ENCODE measurements at regions of chr1 and their contacts with region 1.

Region 1: DNA sequence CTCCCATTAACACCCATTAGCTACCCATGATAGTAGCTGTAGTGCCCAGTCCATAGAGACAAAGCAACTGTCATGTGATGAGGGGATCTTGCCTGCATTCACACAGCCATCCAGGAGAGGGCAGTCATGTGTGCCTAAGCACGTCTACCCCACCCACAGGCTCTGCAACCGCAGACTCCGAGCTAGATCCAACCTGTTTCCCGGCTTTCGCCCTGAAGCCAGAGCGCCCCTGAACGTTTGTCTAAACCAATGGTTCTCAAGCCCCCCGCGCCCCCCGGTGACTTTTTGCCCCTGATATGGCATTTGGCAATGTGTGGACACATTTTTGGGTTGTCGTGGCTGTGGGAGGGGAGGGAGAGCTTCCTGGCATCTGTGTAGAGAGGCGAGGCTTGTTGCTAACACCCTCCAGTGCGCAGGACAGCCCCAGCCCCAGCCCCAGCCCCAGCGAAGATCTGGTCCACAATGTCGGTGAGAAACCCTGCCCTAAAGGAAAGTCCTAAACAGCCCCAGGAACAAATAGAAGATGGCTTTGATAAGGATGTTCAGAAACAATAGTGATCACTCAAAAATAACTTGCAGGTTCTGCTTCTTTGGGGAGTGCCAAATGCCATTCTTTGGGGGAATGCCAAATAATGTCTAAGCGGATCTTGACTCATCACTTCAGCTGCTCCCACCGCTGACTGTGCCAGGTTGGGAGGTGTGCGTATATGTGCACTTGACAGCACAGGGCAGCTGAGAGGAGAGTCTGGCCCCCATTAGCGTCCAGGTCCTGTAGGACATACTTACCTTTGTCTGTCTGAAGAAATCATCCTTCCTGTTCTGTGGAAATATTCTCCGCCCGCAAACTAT is 34.5 kb downstream of the SLC44A3 start:
- DNase-seq: peak; percentile 61 to 78
- H3K4me3 ChIP-seq: peak overlapping the region in 3 of 4 experiments; percentile 16 to 52 (median 25); a peak in 4 of 8 replicates
- H3K27ac ChIP-seq: no peak overlapping the region
- H3K4me1 ChIP-seq: peaks cover 0 to 6% (median under 1%) of the 10 kb centered on the region in 4 experiments; a peak in 3 of 7 replicates
- H3K27me3 ChIP-seq: peaks cover 0 to 5% (median 2%) of the 10 kb centered on the region in 4 experiments; a peak in 3 of 7 replicates
- CTCF ChIP-seq: peak; percentile 93 to 100 (median 95)
- EP300 ChIP-seq: peak in 1 of 2 experiments; percentile 5; a peak in 1 of 3 replicates
- POLR2A ChIP-seq: no peak
- RAD21 ChIP-seq: peak; percentile 93 to 97

Region 2: DNA sequence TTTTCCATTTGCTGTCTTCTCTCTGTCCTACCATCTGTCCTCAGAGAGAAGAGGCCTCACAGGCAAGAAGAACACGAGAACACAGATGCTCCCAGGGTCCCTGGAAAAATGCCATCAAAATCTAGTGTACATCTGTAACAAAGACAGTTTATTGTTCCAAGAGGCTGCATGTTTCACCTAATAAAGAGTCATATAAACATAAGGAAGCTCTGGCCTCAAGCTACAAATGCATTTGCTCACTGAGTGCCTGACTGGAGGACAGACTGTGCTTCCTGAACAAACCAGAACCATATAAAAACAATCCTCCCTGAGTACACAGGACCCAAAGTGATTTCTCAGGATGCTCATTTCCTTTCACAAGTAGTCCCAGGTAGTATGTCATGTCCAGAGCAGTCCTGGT is 110.8 kb before region 1 on chr1:
- CTCF ChIA-PET with region 1: no interaction called
- POLR2A ChIA-PET with region 1: no interaction called
- DNase-seq: no peak
- H3K4me3 ChIP-seq: no peak overlapping the region
- H3K27ac ChIP-seq: no peak overlapping the region
- H3K4me1 ChIP-seq: no peaks in the 10 kb centered on the region
- H3K27me3 ChIP-seq: no peaks in the 10 kb centered on the region
- CTCF ChIP-seq: no peak
- EP300 ChIP-seq: no peak
- POLR2A ChIP-seq: no peak
- RAD21 ChIP-seq: no peak

Region 3: DNA sequence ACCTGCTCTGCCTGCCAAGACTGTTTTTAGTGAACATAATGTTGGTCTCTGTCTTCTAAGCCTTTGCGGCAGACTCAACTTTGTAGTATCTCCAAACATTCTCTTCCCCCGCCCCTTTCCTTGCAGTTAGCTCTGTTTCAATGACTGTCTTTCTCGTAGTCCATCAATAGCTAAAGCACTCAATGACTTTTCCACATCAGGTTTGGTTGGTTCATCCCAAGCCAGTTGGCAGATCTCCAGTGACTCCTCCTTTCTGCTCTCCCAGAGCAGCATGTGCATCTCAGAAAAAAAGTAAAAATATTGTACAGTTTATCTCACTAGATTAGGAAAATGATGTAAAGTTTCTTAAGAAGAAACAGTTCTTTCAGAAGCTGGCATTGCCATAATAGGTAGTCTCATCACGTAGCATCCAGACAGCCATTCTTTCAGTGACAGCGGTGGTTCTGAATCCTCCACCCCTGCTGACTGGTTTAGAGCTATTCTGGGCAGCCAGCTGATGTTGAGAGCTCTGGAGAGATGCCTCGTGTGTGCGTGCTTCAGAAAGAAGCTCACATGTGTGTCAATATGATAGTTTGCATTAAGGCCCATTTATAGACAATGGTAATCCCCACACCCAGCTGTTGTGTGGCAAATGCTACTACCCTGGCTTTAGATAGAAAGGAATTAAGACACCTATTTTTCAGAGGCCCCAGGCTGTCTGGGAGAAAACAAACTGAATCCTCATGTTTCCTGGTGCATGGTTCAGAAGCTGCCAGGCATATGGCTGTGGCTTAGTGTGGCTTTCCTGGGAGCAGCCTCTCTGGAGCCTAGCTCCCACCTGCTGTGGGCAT is 19.1 kb after region 1 on chr1:
- CTCF ChIA-PET with region 1: interaction called, 19 read pairs
- POLR2A ChIA-PET with region 1: no interaction called
- DNase-seq: no peak
- H3K4me3 ChIP-seq: no peak overlapping the region
- H3K27ac ChIP-seq: no peak overlapping the region
- H3K4me1 ChIP-seq: peaks cover 0 to 6% (median 4%) of the 10 kb centered on the region in 4 experiments; a peak in 2 of 7 replicates
- H3K27me3 ChIP-seq: no peaks in the 10 kb centered on the region
- CTCF ChIP-seq: no peak
- EP300 ChIP-seq: no peak
- POLR2A ChIP-seq: no peak
- RAD21 ChIP-seq: no peak

Region 4: DNA sequence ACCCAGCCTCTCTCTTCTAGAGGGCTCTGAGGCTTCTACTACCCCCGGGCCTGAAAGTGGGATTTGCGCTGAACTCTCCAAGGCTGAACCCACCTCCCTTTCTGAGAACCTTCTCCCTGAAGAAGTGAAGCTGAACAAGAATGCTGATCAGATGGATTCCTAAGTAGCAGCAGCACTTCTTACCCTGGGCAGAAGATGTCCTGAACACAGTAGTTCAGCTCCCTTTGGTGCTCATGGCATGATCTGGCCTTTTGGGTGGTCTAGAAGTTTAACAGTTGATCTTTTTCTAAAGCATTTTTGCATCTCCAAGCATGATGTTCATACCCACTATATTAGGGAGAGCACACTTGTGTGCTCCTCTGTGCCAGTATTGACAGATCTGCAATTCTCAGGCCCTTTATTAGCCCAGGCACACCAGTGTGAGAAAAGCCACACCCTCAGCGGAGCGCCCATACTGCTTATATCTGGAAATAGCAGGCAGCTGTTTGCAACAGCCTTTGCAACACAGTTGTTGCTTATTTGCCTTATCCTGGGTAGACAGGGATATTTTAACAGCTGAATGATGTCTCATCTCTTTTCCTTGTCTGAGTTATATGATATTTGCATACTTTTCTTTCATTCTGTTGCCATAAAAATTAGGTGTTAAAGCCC is 38.0 kb after region 1 on chr1:
- CTCF ChIA-PET with region 1: interaction called, 27 read pairs
- POLR2A ChIA-PET with region 1: interaction called, 5 read pairs
- DNase-seq: peak in 1 of 2 experiments; percentile 41
- H3K4me3 ChIP-seq: no peak overlapping the region
- H3K27ac ChIP-seq: no peak overlapping the region
- H3K4me1 ChIP-seq: peaks cover 0 to 11% (median 9%) of the 10 kb centered on the region in 4 experiments; a peak in 5 of 7 replicates
- H3K27me3 ChIP-seq: no peaks in the 10 kb centered on the region
- CTCF ChIP-seq: no peak
- EP300 ChIP-seq: no peak
- POLR2A ChIP-seq: no peak
- RAD21 ChIP-seq: no peak

Region 5: GRCh38 chr1:94920051-94920450 is 65.4 kb after region 1 on chr1:
- CTCF ChIA-PET with region 1: interaction called, 10 read pairs
- POLR2A ChIA-PET with region 1: no interaction called
- DNase-seq: no peak
- H3K4me3 ChIP-seq: no peak overlapping the region
- H3K27ac ChIP-seq: no peak overlapping the region
- H3K4me1 ChIP-seq: peaks cover 4 to 12% (median 5%) of the 10 kb centered on the region in 4 experiments; a peak in 6 of 7 replicates
- H3K27me3 ChIP-seq: no peaks in the 10 kb centered on the region
- CTCF ChIP-seq: no peak
- EP300 ChIP-seq: no peak
- POLR2A ChIP-seq: no peak
- RAD21 ChIP-seq: no peak

Region 6: GRCh38 chr1:94942171-94943128 is 87.8 kb after region 1 on chr1:
- CTCF ChIA-PET with region 1: interaction called, 20 read pairs
- POLR2A ChIA-PET with region 1: no interaction called
- DNase-seq: no peak
- H3K4me3 ChIP-seq: no peak overlapping the region
- H3K27ac ChIP-seq: no peak overlapping the region
- H3K4me1 ChIP-seq: peaks cover 0 to 4% (median 3%) of the 10 kb centered on the region in 4 experiments; a peak in 2 of 7 replicates
- H3K27me3 ChIP-seq: no peaks in the 10 kb centered on the region
- CTCF ChIP-seq: no peak
- EP300 ChIP-seq: no peak
- POLR2A ChIP-seq: no peak
- RAD21 ChIP-seq: no peak

Region 7: GRCh38 chr1:95035536-95035935 is 180.9 kb after region 1 on chr1:
- CTCF ChIA-PET with region 1: interaction called, 39 read pairs
- POLR2A ChIA-PET with region 1: no interaction called
- DNase-seq: no peak
- H3K4me3 ChIP-seq: no peak overlapping the region
- H3K27ac ChIP-seq: no peak overlapping the region
- H3K4me1 ChIP-seq: no peaks in the 10 kb centered on the region; a peak in 1 of 7 replicates
- H3K27me3 ChIP-seq: no peaks in the 10 kb centered on the region; a peak in 1 of 7 replicates
- CTCF ChIP-seq: no peak
- EP300 ChIP-seq: no peak
- POLR2A ChIP-seq: no peak
- RAD21 ChIP-seq: no peak

Measured in H1 (cell line).